ENCODE measurements at regions of chr19 and their contacts with region 1.

Region 1: GRCh38 chr19:35495107-35496064 is 5.1 kb upstream of the KRTDAP start:
- DNase-seq: peak; percentile 57 to 65
- ATAC-seq: peak; percentile 77 to 93 (median 89)
- H3K4me3 ChIP-seq: no peak overlapping the region
- H3K27ac ChIP-seq: no peak overlapping the region
- H3K4me1 ChIP-seq: peaks cover 0 to 8% (median 3%) of the 10 kb centered on the region in 9 donors
- H3K27me3 ChIP-seq: peaks cover 0 to 11% (median 8%) of the 10 kb centered on the region in 7 donors
- CTCF ChIP-seq: peak; percentile 93 to 99 (median 98)

Region 2: GRCh38 chr19:35295792-35296462 is 199.5 kb before region 1 on chr19:
- intact Hi-C with region 1: no loop called
- DNase-seq: no peak
- ATAC-seq: no peak
- H3K4me3 ChIP-seq: no peak overlapping the region
- H3K27ac ChIP-seq: no peak overlapping the region
- H3K4me1 ChIP-seq: peaks cover 0 to 6% (median 0%) of the 10 kb centered on the region in 9 donors
- H3K27me3 ChIP-seq: peaks cover 0 to 73% (median 44%) of the 10 kb centered on the region in 7 donors
- CTCF ChIP-seq: no peak

Region 3: DNA sequence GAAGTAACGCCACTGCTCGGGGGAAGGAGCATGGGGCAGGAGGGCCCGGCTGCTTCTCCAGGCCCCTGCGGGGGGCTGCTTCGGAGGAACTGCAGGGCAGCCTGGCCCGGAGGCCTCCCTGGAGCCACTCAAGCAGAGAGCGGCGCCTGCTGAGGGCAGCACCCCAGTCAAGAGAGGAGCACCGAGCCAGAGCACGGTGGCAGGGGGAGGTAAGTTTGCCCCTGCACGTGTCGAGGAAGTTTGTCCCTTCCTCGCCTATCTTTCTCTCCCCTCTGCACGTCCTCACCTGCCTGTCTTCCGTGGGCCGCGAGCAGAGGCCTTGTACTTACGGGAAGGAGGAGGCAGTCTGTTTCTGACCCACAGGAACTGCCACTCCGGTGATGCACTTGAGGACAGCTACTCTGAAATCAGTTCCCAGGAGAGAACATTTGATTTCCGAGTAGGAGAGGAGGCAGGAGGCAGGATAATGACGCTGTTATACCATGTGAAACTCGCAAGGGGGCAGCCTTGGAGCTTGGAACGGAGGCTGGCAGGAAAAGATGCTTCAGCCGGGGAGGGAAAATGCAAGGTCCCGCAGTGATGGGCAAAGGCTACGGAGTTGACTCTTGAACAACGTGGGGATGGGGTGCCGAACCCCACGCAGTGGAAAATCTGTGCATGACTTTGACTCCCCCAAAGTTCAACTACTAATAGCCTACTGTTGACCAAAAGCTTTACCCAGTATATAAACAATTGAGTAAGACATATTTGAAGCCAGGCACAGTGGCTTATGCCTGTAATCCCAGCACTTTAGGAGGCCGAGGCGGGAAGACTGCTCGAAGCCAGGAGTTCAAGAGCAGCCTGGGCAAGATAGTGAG is 142.7 kb before region 1 on chr19:
- intact Hi-C with region 1: loop called in 9 of 10 experiments (anchors 1 to 10 kb)
- DNase-seq: peak; percentile 50 to 73
- ATAC-seq: peak; percentile 44 to 83 (median 66)
- H3K4me3 ChIP-seq: no peak overlapping the region
- H3K27ac ChIP-seq: peak overlapping the region in 1 of 10 donors; percentile 10
- H3K4me1 ChIP-seq: peaks cover 0 to 25% (median 0%) of the 10 kb centered on the region in 9 donors
- H3K27me3 ChIP-seq: peaks cover 0 to 26% (median 10%) of the 10 kb centered on the region in 7 donors
- CTCF ChIP-seq: peak; percentile 66 to 84 (median 78)

Region 4: DNA sequence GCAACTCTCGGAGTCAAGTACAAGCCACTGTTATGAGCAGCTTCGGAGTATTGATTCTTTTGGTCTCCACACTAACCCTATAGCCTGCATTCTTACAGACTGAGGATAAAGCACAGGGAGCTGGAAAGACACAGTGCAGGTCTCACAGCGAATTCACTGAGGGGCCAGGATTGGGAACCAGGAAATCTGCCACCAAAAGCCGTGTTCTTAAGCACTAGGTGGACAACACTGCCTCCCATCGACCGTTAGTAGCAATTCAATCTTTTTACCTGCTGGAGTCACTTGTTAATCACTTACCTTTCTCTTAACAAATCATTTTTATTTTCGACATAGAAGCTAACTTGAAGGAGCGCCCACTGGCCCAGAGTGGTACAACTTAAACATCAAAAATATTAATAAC is 96.8 kb after region 1 on chr19:
- intact Hi-C with region 1: no loop called
- DNase-seq: no peak
- ATAC-seq: peak in 1 of 8 donors; percentile 31
- H3K4me3 ChIP-seq: no peak overlapping the region
- H3K27ac ChIP-seq: no peak overlapping the region
- H3K4me1 ChIP-seq: no peaks in the 10 kb centered on the region
- H3K27me3 ChIP-seq: peaks cover 0 to 29% (median 14%) of the 10 kb centered on the region in 7 donors
- CTCF ChIP-seq: peak in 7 of 9 donors; percentile 30 to 56 (median 43)